GM12878 (cell line): ENCODE measurements at regions of chr6 and their contacts with region 1.

Region 1: GRCh38 chr6:143575440-143575839 is 63.9 kb upstream of the FUCA2 start:
- DNase-seq: peak; percentile 27
- ATAC-seq: peak; percentile 94
- H3K4me3 ChIP-seq: no peak overlapping the region
- H3K27ac ChIP-seq: no peak overlapping the region
- H3K4me1 ChIP-seq: no peaks in the 10 kb centered on the region
- H3K27me3 ChIP-seq: no peaks in the 10 kb centered on the region; a peak in 2 of 4 replicates
- CTCF ChIP-seq: peak; percentile 63 to 81 (median 79)
- EP300 ChIP-seq: no peak
- POLR2A ChIP-seq: no peak
- RAD21 ChIP-seq: peak; percentile 89

Region 2: DNA sequence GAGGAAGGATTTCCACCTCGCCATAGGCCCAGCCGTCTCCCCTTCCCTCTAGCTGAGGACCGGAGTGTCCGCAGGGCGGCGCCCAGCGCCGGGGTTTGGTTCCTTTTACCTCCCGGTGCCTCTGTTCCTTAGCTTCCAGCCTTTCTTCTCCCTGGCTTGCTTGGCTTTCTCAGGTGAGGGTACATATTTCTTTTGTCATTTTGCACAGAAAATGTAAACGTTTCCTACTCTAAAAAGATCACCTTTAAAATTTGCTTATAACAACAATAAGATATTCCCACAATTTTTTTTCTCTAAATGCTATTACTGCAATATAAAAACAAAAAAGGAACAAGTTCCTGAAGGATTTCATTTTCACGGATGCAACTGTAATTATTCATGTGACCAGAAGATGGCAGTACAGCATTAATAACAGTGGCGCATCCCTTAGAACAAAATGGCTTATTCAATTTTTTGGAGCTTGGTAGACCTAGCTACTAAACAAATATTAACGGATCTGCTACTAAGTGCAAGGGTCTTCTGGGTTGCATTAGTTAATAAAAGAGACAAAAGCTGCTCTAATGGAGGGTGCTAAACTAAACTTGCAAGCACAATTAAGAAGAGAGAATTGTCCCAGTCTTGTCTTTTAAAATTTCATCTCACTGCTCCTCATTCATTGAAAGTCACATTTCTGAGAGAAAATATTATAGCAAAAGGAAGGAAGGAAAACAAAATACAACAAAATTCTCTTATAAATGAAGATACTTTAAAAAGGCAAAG is 1100.7 kb before region 1 on chr6:
- CTCF ChIA-PET with region 1: interaction called, 3 read pairs
- POLR2A ChIA-PET with region 1: no interaction called
- RAD21 ChIA-PET with region 1: interaction called, 3 read pairs
- SMC1A ChIA-PET with region 1: no interaction called
- in situ Hi-C with region 1: no loop called
- intact Hi-C with region 1: loop called (anchors 10 kb)
- DNase-seq: no peak
- ATAC-seq: peak; percentile 69
- H3K4me3 ChIP-seq: no peak overlapping the region
- H3K27ac ChIP-seq: no peak overlapping the region
- H3K4me1 ChIP-seq: no peaks in the 10 kb centered on the region
- H3K27me3 ChIP-seq: no peaks in the 10 kb centered on the region; a peak in 1 of 4 replicates
- CTCF ChIP-seq: peak; percentile 53 to 79 (median 64); a peak in 5 of 6 replicates
- EP300 ChIP-seq: no peak
- POLR2A ChIP-seq: no peak
- RAD21 ChIP-seq: peak; percentile 89

Region 3: GRCh38 chr6:143842902-143843676 is 267.6 kb after region 1 on chr6 and contains the start of gene LTV1:
- CTCF ChIA-PET with region 1: interaction called, 3 read pairs
- POLR2A ChIA-PET with region 1: no interaction called
- RAD21 ChIA-PET with region 1: interaction called, 4 read pairs
- SMC1A ChIA-PET with region 1: interaction called, 7 read pairs
- in situ Hi-C with region 1: no loop called
- intact Hi-C with region 1: loop called (anchors 5 kb)
- DNase-seq: peak; percentile 81
- ATAC-seq: peak; percentile 99
- H3K4me3 ChIP-seq: peak within 1 kb of the TSS; percentile 88
- H3K27ac ChIP-seq: peak within 1 kb of the TSS; percentile 78
- H3K4me1 ChIP-seq: no peaks in the 10 kb centered on the region
- H3K27me3 ChIP-seq: no peaks in the 10 kb centered on the region
- CTCF ChIP-seq: no peak
- EP300 ChIP-seq: no peak
- POLR2A ChIP-seq: peak; percentile 85
- RAD21 ChIP-seq: no peak
- polyA plus RNA-seq, gene LTV1: 33.9 to 57.9 TPM